ENCODE measurements at regions of chr1 and their contacts with region 1.

Region 1: GRCh38 chr1:51627678-51628077 is 10.8 kb downstream of the OSBPL9 start:
- DNase-seq: no peak
- ATAC-seq: peak; percentile 54

Region 2: GRCh38 chr1:51768971-51769588 is 141.4 kb after region 1 on chr1:
- intact Hi-C with region 1: loop called (anchors 5 kb)
- DNase-seq: no peak
- ATAC-seq: peak; percentile 83

Measured in Right ventricle myocardium superior (tissue), 1 donor.